ENCODE measurements at regions of chr12 and their contacts with region 1.

Region 1: GRCh38 chr12:3803865-3804472 is 51.1 kb upstream of the CRACR2A start:
- DNase-seq: peak; percentile 69 to 79 (median 71)
- H3K4me3 ChIP-seq: no peak overlapping the region
- H3K27ac ChIP-seq: no peak overlapping the region
- H3K4me1 ChIP-seq: no peaks in the 10 kb centered on the region
- H3K27me3 ChIP-seq: no peaks in the 10 kb centered on the region

Region 2: DNA sequence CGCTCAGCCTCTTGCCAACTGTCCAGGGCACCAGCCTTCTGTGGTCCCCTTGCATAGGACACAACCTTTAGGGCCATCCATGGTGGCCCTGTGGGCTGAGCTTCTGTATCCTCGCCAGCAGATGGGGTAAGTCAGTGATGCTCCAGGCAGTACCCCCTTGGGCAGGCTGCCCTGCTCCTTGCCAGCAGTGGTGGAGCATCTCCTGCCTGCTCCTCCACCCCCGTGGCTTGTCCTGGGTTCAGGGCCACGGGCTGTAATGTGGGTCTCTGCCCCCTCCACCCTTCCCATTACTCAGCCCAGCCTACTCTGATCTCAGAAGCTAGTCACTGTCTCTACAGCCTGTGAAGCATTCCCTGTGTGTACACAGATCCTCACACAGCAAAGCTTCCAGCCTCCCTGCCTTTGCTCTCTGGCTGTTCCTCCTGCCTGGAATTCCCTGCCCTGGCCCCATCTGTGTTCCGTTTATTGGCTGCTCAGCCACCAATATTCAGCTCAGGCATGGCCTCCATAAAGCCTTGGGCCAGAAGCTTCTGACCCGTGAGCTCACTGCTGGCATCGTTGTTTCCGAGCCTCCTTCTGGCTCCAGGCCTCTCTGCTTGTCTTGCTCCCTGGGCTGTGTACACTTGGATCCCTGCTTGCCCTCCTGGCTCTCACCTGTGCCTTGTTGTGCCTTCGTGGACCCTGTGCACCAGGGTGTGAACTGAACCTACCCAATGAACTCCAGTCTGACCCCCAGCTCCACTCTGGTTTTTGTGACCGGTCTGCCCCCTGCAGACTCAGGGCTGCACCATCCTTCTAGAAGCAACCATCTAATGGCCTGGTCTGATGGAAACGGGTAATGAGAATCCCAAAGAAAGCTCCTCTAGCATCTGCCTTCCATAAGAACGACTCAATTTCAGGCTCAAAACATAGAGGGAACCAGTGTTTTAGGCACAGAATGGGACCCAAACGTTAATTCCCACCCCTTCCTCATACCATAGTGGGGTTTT is 490.0 kb before region 1 on chr12:
- CTCF ChIA-PET with region 1: interaction called, 24 read pairs
- POLR2A ChIA-PET with region 1: no interaction called
- DNase-seq: peak; percentile 44 to 64 (median 62)
- H3K4me3 ChIP-seq: no peak overlapping the region
- H3K27ac ChIP-seq: no peak overlapping the region
- H3K4me1 ChIP-seq: no peaks in the 10 kb centered on the region
- H3K27me3 ChIP-seq: peaks cover 0 to 21% (median 15%) of the 10 kb centered on the region in 5 experiments

Region 3: GRCh38 chr12:3815094-3815766 is 11.3 kb after region 1 on chr12:
- CTCF ChIA-PET with region 1: interaction called, 10 read pairs
- POLR2A ChIA-PET with region 1: no interaction called
- DNase-seq: no peak
- H3K4me3 ChIP-seq: no peak overlapping the region
- H3K27ac ChIP-seq: no peak overlapping the region
- H3K4me1 ChIP-seq: peaks cover 0 to 9% (median 2%) of the 10 kb centered on the region in 4 experiments
- H3K27me3 ChIP-seq: no peaks in the 10 kb centered on the region

Region 4: GRCh38 chr12:3901116-3901515 is 97.1 kb after region 1 on chr12:
- CTCF ChIA-PET with region 1: no interaction called
- POLR2A ChIA-PET with region 1: no interaction called
- DNase-seq: no peak
- H3K4me3 ChIP-seq: no peak overlapping the region
- H3K27ac ChIP-seq: no peak overlapping the region
- H3K4me1 ChIP-seq: peaks cover 10 to 45% (median 26%) of the 10 kb centered on the region in 4 experiments
- H3K27me3 ChIP-seq: no peaks in the 10 kb centered on the region